ENCODE measurements at regions of chr10 and their contacts with region 1.

Region 1: DNA sequence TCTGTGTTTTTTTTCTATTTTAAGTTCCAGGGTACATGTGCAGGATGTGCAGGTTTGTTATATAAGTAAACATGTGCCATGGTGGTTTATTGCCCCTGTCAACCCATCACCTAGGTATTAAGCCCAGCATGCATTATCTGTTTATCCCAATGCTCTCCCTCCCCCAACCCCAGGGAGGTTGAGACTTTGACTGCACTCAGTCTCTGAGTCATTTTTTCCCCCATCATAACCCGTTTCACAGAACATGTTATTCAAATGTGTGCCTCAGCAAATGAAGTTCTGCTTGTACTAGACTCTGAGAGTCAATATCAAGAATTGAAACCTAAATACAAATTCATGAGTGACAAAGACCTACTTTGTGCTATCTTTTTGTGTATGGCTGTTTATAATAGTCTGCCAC is 70.0 kb upstream of the CYP26C1 start:
- DNase-seq: peak; percentile 62
- H3K4me3 Mint-ChIP-seq: no peak overlapping the region
- H3K27ac Mint-ChIP-seq: peak overlapping the region; percentile 70
- H3K4me1 Mint-ChIP-seq: peaks cover 37% of the 10 kb centered on the region
- H3K27me3 Mint-ChIP-seq: no peaks in the 10 kb centered on the region

Region 2: DNA sequence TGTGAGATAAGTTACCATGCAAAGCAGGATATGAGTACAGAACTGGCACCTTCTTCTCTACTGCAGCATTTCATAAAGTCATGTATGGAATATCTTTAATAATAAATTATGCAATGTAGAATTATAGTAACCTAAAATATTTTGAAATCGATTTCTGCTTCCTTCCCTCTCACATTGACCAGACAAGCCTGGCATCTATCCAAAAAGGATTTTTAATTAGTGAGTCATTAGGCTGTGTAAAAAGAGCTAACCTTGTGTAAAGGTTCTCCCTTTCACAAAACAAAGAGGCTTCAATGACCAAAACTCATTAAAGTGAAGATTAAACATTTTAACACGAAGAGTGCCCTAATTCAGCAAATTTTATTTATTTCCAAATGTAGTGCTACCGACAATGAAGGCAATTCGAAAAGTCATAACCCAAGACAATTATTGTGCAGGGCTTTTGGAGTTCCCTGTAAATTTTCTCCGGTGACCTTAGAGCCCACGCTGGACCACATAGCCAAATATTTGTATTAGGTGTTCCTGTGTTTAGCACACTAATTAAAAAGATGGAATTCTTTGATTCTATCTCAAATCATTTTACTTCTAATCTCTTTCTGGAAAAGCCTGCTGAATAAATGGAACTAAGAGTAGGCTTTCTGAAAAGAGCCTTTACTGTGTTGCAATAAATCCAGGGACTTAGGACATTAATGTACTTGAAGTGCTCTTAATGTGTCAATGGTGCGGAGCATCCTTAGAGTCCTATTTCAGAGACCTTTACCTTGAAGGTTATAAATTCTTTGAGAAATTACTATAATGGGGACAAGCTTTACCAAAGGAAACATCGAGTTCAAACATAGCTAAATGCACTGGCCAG is 190.8 kb before region 1 on chr10:
- CTCF ChIA-PET with region 1: no interaction called
- intact Hi-C with region 1: no loop called
- DNase-seq: no peak
- H3K4me3 Mint-ChIP-seq: no peak overlapping the region
- H3K27ac Mint-ChIP-seq: no peak overlapping the region
- H3K4me1 Mint-ChIP-seq: no peaks in the 10 kb centered on the region
- H3K27me3 Mint-ChIP-seq: no peaks in the 10 kb centered on the region

Region 3: DNA sequence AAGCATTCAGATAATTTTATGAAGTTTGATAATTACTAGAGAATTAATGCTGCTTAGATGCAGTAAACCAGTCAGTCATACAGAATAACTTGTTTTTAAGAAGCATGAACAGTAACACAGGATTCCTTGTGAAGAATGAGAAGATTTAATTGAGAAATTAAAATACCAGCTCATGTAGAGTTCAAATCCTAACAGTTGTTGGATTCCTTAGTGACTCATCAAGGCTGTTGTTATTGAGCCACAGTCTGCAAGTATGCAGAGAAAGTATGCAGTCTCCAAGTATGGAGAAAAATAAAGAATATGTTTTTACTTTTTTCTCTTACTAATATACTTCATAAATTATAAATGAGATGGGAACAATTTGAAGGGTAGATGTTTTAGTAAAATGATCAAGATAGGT is 39.8 kb after region 1 on chr10:
- CTCF ChIA-PET with region 1: no interaction called
- intact Hi-C with region 1: no loop called
- DNase-seq: no peak
- H3K4me3 Mint-ChIP-seq: no peak overlapping the region
- H3K27ac Mint-ChIP-seq: no peak overlapping the region
- H3K4me1 Mint-ChIP-seq: no peaks in the 10 kb centered on the region
- H3K27me3 Mint-ChIP-seq: no peaks in the 10 kb centered on the region

Region 4: GRCh38 chr10:93893646-93894515 is 903.3 kb after region 1 on chr10 and contains the start of gene SLC35G1:
- CTCF ChIA-PET with region 1: no interaction called
- intact Hi-C with region 1: loop called (anchors 5 kb)
- DNase-seq: peak; percentile 71
- H3K4me3 Mint-ChIP-seq: peak within 1 kb of the TSS; percentile 82
- H3K27ac Mint-ChIP-seq: peak within 1 kb of the TSS; percentile 37
- H3K4me1 Mint-ChIP-seq: peaks cover 37% of the 10 kb centered on the region
- H3K27me3 Mint-ChIP-seq: no peaks in the 10 kb centered on the region
- total RNA-seq, gene SLC35G1: 3.8 to 4.1 TPM

Measured in activated naive CD4-positive, alpha-beta T cell treated with anti-CD3 and anti-CD28 coated beads for 36 hours (primary cell).